ENCODE measurements at regions of chr22 and their contacts with region 1.

Region 1: DNA sequence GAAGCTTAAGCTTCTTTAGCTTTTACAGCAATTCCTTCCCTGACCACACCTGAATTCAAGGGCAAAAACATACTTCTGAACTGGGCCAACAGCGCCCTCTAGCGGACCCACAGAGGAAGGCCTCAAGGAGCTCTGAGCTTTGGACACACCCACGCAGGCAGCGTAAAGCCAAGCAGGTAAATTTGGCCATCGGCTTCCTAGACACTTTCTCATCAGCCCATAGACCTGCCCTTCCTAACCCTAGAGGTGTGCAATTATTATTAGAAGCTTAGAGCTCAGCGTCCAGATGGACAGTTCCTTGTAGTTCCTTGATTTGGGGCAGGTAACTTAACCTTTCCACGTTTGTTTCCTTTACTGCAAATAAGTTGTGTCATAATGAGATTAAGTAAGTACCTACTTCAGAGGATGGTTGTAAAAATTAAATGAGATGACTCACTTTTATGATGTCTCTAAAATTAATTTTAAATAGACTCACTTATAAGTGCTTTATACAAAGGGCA is 25.7 kb upstream of the HMGXB4 start:
- DNase-seq: peak; percentile 33
- ATAC-seq: peak; percentile 82
- H3K4me3 ChIP-seq: no peak overlapping the region
- H3K27ac ChIP-seq: no peak overlapping the region
- H3K4me1 ChIP-seq: peaks cover 3% of the 10 kb centered on the region
- H3K27me3 ChIP-seq: no peaks in the 10 kb centered on the region
- CTCF ChIP-seq: peak; percentile 92 to 96 (median 95)
- EP300 ChIP-seq: no peak
- POLR2A ChIP-seq: no peak
- RAD21 ChIP-seq: peak; percentile 76

Region 2: GRCh38 chr22:34414484-34415440 is 816.9 kb before region 1 on chr22:
- CTCF ChIA-PET with region 1: interaction called, 3 read pairs
- POLR2A ChIA-PET with region 1: no interaction called
- RAD21 ChIA-PET with region 1: interaction called, 4 read pairs
- SMC1A ChIA-PET with region 1: no interaction called
- in situ Hi-C with region 1: no loop called
- intact Hi-C with region 1: loop called (anchors 2 kb)
- DNase-seq: peak; percentile 39
- ATAC-seq: peak; percentile 75
- H3K4me3 ChIP-seq: no peak overlapping the region
- H3K27ac ChIP-seq: no peak overlapping the region
- H3K4me1 ChIP-seq: no peaks in the 10 kb centered on the region
- H3K27me3 ChIP-seq: no peaks in the 10 kb centered on the region
- CTCF ChIP-seq: peak; percentile 80 to 91 (median 83); a peak in 4 of 6 replicates
- EP300 ChIP-seq: no peak
- POLR2A ChIP-seq: no peak
- RAD21 ChIP-seq: peak; percentile 95

Region 3: DNA sequence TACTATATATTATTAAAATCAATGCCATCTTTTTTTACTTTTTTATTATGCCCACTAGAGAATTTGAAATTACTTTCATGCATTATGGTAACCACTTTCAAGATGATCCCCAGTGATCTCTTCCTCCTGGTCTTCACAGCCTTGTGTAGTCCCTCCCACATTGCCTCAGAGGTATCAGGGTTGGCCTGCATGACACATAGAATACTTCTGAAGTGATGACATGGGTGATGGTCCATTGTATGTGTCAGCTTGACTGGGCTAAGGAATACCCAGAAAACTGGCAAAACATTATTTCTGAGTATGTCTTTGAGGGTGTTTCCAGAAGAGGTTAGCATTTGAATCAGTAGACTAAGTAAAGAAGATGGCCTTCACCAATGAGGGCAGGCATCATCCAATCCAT is 179.8 kb before region 1 on chr22:
- CTCF ChIA-PET with region 1: no interaction called
- POLR2A ChIA-PET with region 1: no interaction called
- RAD21 ChIA-PET with region 1: no interaction called
- SMC1A ChIA-PET with region 1: no interaction called
- in situ Hi-C with region 1: no loop called
- intact Hi-C with region 1: loop called (anchors 10 kb)
- DNase-seq: no peak
- ATAC-seq: peak; percentile 73
- H3K4me3 ChIP-seq: no peak overlapping the region
- H3K27ac ChIP-seq: no peak overlapping the region
- H3K4me1 ChIP-seq: peaks cover 21% of the 10 kb centered on the region
- H3K27me3 ChIP-seq: no peaks in the 10 kb centered on the region
- CTCF ChIP-seq: no peak
- EP300 ChIP-seq: no peak
- POLR2A ChIP-seq: no peak
- RAD21 ChIP-seq: no peak

Region 4: DNA sequence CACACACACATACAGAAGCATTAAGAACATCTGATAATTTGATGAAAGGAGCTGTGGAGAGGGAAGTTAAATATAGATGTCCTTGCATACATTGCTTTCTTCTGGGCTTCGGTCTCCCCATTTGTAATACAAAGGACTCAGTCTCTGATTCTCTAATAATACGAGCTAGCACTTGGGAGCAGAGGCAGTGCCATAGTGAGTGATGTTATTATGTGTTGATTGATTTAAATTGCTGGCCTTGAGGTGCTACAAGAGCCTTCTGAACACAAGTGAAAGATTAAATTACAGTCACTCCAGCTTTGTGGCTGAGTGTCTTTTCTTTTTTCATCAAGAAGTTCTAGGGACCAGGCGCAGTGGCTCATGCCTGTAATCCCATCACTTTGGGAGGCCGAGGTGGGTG is 35.8 kb before region 1 on chr22:
- CTCF ChIA-PET with region 1: interaction called, 33 read pairs
- POLR2A ChIA-PET with region 1: no interaction called
- RAD21 ChIA-PET with region 1: interaction called, 3 read pairs
- SMC1A ChIA-PET with region 1: interaction called, 5 read pairs
- in situ Hi-C with region 1: no loop called
- intact Hi-C with region 1: no loop called
- DNase-seq: no peak
- ATAC-seq: no peak
- H3K4me3 ChIP-seq: no peak overlapping the region
- H3K27ac ChIP-seq: no peak overlapping the region
- H3K4me1 ChIP-seq: peaks cover 8% of the 10 kb centered on the region; the same call in 1 of the 2 replicates
- H3K27me3 ChIP-seq: no peaks in the 10 kb centered on the region
- CTCF ChIP-seq: no peak
- EP300 ChIP-seq: no peak
- POLR2A ChIP-seq: no peak
- RAD21 ChIP-seq: no peak

Region 5: GRCh38 chr22:35205961-35206360 is 25.7 kb before region 1 on chr22:
- CTCF ChIA-PET with region 1: interaction called, 11 read pairs
- POLR2A ChIA-PET with region 1: no interaction called
- RAD21 ChIA-PET with region 1: interaction called, 7 read pairs
- SMC1A ChIA-PET with region 1: interaction called, 4 read pairs
- in situ Hi-C with region 1: no loop called
- intact Hi-C with region 1: no loop called
- DNase-seq: no peak
- ATAC-seq: no peak
- H3K4me3 ChIP-seq: no peak overlapping the region
- H3K27ac ChIP-seq: no peak overlapping the region
- H3K4me1 ChIP-seq: no peaks in the 10 kb centered on the region
- H3K27me3 ChIP-seq: no peaks in the 10 kb centered on the region; a peak in 1 of 4 replicates
- CTCF ChIP-seq: no peak
- EP300 ChIP-seq: no peak
- POLR2A ChIP-seq: no peak
- RAD21 ChIP-seq: no peak

Region 6: DNA sequence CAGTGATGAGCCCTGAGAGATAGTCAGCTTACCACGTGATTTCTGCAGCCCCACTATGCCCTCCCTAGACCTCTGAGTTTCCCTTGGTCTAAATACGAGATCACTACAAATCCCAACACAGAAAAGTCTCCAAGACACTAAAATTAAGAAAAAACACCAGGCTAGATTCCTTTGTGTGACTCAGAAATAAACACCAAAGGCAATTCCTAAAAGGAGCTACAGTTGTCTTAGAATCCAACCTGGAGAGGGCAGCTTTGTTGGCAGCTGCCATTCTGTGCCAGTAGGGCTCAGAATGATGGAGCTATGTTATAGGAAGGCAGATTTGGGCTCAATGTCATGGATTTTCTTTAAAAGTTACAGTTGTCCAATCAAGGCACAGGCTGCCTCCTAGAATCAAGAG is 11.4 kb before region 1 on chr22:
- CTCF ChIA-PET with region 1: interaction called, 10 read pairs
- POLR2A ChIA-PET with region 1: interaction called, 3 read pairs
- RAD21 ChIA-PET with region 1: interaction called, 3 read pairs
- SMC1A ChIA-PET with region 1: interaction called, 3 read pairs
- in situ Hi-C with region 1: no loop called
- intact Hi-C with region 1: no loop called
- DNase-seq: no peak
- ATAC-seq: no peak
- H3K4me3 ChIP-seq: no peak overlapping the region
- H3K27ac ChIP-seq: no peak overlapping the region
- H3K4me1 ChIP-seq: no peaks in the 10 kb centered on the region
- H3K27me3 ChIP-seq: no peaks in the 10 kb centered on the region
- CTCF ChIP-seq: no peak
- EP300 ChIP-seq: no peak
- POLR2A ChIP-seq: no peak
- RAD21 ChIP-seq: no peak

Region 7: DNA sequence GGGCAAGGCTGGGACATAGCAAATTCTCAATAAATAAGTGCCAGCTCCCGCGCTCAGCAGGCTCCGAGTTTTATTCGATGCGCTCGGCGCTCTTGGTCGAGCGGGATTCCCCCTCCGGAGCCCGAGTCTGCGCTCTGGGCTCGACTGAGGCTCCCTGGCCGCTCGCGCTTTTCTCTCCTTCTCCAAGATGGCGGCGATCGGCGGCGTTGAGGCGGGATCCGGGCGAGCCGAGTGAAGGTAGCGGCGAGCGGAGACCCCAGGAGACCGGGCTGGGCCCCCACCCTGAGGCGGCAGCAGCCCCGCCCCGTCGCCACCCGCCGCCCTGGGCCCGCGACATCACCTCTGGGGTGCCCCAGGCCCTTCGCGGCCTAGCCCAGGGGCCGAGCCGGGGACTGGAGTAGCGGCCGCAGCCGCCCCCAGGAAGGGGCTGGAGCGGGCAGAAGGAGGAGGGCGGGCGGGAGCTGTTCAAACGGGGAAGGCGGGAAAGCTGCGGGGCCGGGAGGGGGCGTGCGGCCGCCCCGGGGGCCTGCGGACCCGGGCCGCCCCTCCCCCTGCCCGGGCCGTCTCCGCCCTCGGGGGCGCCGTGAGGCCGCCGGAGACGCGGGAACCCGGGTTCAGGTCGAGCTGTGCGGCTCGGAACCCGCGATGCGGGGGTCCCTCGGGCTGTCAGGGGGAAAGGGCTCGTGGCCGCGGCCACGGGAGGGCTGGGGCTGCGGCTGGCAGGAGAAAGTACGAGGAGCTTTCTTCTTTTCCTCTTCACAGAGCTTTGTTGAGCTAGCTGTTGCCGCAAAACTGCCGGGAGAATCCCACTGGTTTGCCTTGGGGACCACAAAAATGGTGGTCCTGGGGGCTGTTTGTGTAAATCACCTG is 25.9 kb after region 1 on chr22 and contains the start of gene HMGXB4:
- CTCF ChIA-PET with region 1: interaction called, 11 read pairs
- POLR2A ChIA-PET with region 1: no interaction called
- RAD21 ChIA-PET with region 1: interaction called, 3 read pairs
- SMC1A ChIA-PET with region 1: no interaction called
- in situ Hi-C with region 1: no loop called
- intact Hi-C with region 1: no loop called
- DNase-seq: peak; percentile 38
- ATAC-seq: peak; percentile 94
- H3K4me3 ChIP-seq: peak within 1 kb of the TSS; percentile 73
- H3K27ac ChIP-seq: peak within 1 kb of the TSS; percentile 74
- H3K4me1 ChIP-seq: 0 out of 2 replicates have a peak, but pooled peaks cover 5% of the 10 kb centered on the region
- H3K27me3 ChIP-seq: no peaks in the 10 kb centered on the region
- CTCF ChIP-seq: no peak
- EP300 ChIP-seq: no peak
- POLR2A ChIP-seq: peak; percentile 75
- RAD21 ChIP-seq: no peak
- polyA plus RNA-seq, gene HMGXB4: 32.1 to 44.5 TPM

Region 8: GRCh38 chr22:35288116-35288515 is 56.5 kb after region 1 on chr22:
- CTCF ChIA-PET with region 1: no interaction called
- POLR2A ChIA-PET with region 1: no interaction called
- RAD21 ChIA-PET with region 1: no interaction called
- SMC1A ChIA-PET with region 1: no interaction called
- in situ Hi-C with region 1: no loop called
- intact Hi-C with region 1: no loop called
- DNase-seq: no peak
- ATAC-seq: no peak
- H3K4me3 ChIP-seq: no peak overlapping the region
- H3K27ac ChIP-seq: no peak overlapping the region
- H3K4me1 ChIP-seq: no peaks in the 10 kb centered on the region
- H3K27me3 ChIP-seq: no peaks in the 10 kb centered on the region
- CTCF ChIP-seq: no peak
- EP300 ChIP-seq: no peak
- POLR2A ChIP-seq: no peak
- RAD21 ChIP-seq: no peak

Measured in GM12878 (cell line).